Dendritic cell treated with granulocyte-macrophage colony-stimulating factor and Interleukin-4, amounts not matched to agents 40 ng/mL and 50 ng/mL, for 4 days (primary cell): ENCODE measurements at regions of chr4 and their contacts with region 1.

Region 1: DNA sequence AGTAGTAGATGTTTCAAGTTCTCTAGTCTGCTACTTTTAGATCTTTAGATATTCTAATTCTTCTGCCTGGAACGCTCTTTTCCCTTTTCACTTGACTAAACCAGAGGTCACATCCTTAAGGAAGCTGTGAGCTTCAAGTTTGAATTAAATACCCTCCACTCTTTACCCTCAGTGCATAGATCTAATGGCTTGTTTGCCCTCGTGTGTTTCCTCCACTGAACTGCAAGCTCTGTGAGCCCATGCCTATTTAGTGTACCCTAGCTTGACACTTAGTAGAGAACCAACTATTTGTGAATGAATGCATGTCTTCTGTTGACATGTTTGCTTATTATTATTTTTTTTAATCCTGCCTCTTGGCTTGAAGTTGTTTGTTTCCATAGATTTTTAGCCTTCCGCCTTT is 138.3 kb downstream of the PDE5A start:
- H3K4me3 Mint-ChIP-seq: no peak overlapping the region
- H3K27ac Mint-ChIP-seq: no peak overlapping the region
- H3K4me1 Mint-ChIP-seq: no peaks in the 10 kb centered on the region
- H3K27me3 Mint-ChIP-seq: no peaks in the 10 kb centered on the region

Region 2: DNA sequence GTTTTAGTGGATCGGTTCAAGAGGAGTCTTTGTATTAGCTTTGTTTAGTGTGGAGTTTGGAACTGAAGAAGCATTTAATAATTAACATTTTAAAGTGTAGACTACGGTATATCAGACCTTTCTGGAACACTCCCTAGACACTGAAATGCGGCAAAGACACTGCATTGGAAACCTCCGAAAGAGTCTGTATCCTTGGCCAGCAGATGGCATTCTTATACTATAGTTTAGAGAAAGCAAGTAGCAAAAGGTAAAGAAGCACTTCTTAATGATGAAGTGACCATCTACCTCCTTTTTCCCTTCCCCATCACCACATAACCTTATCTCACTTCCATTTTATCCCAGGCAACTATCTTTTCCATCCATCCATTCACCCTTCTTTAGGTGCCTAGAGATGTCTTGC is 176.0 kb before region 1 on chr4:
- intact Hi-C with region 1: loop called (anchors 2 kb)
- H3K4me3 Mint-ChIP-seq: no peak overlapping the region
- H3K27ac Mint-ChIP-seq: no peak overlapping the region
- H3K4me1 Mint-ChIP-seq: peaks cover 5% of the 10 kb centered on the region
- H3K27me3 Mint-ChIP-seq: no peaks in the 10 kb centered on the region

Region 3: DNA sequence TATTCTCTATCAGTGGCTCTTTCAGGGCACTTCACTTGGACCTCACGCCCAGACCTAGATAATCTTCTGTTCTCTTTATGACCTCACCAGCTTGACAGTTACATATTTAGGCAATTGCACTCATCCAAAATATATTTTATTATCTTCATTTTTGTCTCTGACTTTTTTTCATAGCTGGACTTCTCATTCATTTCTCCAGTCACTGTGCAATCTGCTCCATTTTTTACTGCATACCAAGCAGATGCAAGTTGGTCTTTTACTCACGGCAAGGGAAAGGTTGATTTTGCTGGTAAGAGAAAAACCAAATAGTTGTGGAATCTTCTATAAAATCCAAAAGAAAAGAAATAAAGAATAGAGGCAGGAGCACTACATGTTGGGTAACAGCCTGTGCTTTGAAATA is 544.6 kb after region 1 on chr4:
- intact Hi-C with region 1: no loop called
- H3K4me3 Mint-ChIP-seq: no peak overlapping the region
- H3K27ac Mint-ChIP-seq: no peak overlapping the region
- H3K4me1 Mint-ChIP-seq: no peaks in the 10 kb centered on the region
- H3K27me3 Mint-ChIP-seq: peaks cover 6% of the 10 kb centered on the region